Activated T-helper 1 cell treated with anti-CD3 and anti-CD28 coated beads, Interleukin-12 subunit alpha, Interleukin-12 subunit beta, Interleukin-2, Interleukin-4 antibody, amounts not matched to agents 30 ng/mL and 10 ng/mL and 1 ng/mL, durations not matched to agents 14 hours and 24 hours and 36 hours (primary cell): ENCODE measurements at regions of chr3 and their contacts with region 1.

Region 1: DNA sequence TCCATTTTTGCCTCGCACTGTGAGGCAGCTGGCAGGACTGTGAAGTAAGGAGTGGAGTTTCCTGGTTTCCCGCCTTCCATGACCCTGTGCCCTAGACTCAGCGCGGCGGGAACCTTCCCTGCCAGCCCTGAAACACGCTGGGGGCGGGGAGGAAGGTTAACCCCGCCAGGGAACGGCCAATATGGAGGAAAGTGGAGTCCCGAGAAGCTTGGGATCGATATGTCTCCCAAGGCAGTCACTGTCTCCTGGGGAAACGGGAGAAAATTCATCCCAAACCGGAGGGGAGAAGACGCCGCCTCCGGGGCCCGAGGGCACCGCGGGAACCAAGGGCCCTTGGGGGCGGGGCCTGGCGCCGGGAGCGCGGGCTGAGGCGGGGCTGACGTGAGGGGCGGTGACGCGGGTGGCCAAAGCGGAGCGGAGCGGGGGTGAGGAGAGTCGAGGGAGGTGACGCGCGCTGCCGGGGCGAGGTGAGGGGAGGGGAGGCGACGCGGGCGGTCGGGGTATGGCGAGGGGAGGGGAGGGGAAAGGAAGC is at the start of gene HMCES:
- DNase-seq: peak; percentile 92
- H3K4me3 Mint-ChIP-seq: peak within 1 kb of the TSS; percentile 93
- H3K27ac Mint-ChIP-seq: peak within 1 kb of the TSS; percentile 97
- H3K4me1 Mint-ChIP-seq: peaks cover 48% of the 10 kb centered on the region
- H3K27me3 Mint-ChIP-seq: no peaks in the 10 kb centered on the region
- total RNA-seq, gene HMCES: 59.4 and 61.6 TPM in 2 replicates

Region 2: DNA sequence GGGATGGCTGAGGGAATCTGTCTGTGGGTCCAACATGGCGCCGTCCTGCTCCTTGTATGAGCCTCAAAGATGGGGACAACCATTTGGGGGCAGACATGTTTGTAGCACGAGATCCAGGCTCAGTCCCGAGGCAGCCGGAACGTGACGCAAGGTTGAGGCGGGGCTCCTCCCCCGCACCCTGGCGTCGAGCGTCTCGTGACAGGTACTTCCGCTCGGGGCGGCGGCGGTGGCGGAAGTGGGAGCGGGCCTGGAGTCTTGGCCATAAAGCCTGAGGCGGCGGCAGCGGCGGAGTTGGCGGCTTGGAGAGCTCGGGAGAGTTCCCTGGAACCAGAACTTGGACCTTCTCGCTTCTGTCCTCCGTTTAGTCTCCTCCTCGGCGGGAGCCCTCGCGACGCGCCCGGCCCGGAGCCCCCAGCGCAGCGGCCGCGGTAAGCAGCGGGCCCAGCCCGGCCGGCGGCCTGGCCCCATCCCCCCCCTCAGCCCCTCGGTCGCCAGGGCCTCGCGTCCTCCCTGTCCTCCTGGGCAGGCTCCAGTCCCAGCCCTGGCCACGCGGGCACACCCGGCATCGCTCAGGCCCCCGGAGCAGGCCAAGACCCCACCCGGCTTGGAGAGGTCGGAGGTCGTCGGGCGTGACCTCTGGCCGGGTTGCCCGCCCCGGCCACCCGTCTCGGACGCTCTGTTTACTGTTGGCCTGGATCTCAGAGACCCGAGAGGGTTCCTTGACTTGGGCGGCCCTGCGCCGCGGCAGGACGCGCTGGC is 552.4 kb before region 1 on chr3 and contains the start of gene RAB7A:
- intact Hi-C with region 1: no loop called
- DNase-seq: peak; percentile 94
- H3K4me3 Mint-ChIP-seq: peak within 1 kb of the TSS; percentile 99
- H3K27ac Mint-ChIP-seq: peak within 1 kb of the TSS; percentile 93
- H3K4me1 Mint-ChIP-seq: peaks cover 56% of the 10 kb centered on the region
- H3K27me3 Mint-ChIP-seq: no peaks in the 10 kb centered on the region
- total RNA-seq, gene RAB7A: 318 and 329 TPM in 2 replicates

Region 3: GRCh38 chr3:129183569-129184395 is 94.7 kb before region 1 on chr3 and contains the start of gene CNBP:
- intact Hi-C with region 1: loop called (anchors 1 kb)
- DNase-seq: peak; percentile 91
- H3K4me3 Mint-ChIP-seq: peak within 1 kb of the TSS; percentile 97
- H3K27ac Mint-ChIP-seq: peak within 1 kb of the TSS; percentile 98
- H3K4me1 Mint-ChIP-seq: peaks cover 35% of the 10 kb centered on the region
- H3K27me3 Mint-ChIP-seq: no peaks in the 10 kb centered on the region
- total RNA-seq, gene CNBP: 408 and 425 TPM in 2 replicates

Region 4: DNA sequence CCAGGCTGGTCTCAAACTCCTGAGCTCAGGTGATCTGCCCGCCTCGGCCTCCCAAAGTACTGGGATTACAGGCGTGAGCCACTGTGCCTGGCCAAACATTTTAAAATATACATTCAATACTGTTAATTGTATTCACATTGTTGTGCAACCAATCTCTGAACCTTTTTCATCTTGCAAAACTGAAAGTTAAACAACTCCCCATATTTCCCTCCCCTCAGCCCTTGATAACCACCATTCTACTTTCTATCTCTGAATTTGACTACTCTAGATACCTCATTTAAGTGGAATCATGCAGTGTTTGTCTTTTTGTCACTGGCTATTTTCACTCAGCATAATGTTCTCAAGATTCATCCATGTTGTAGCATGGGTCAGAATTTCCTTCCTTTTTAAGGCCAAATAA is 30.1 kb after region 1 on chr3:
- intact Hi-C with region 1: loop called (anchors 1 kb)
- DNase-seq: no peak
- H3K4me3 Mint-ChIP-seq: no peak overlapping the region
- H3K27ac Mint-ChIP-seq: peak overlapping the region; percentile 2
- H3K4me1 Mint-ChIP-seq: peaks cover 63% of the 10 kb centered on the region
- H3K27me3 Mint-ChIP-seq: no peaks in the 10 kb centered on the region

Region 5: DNA sequence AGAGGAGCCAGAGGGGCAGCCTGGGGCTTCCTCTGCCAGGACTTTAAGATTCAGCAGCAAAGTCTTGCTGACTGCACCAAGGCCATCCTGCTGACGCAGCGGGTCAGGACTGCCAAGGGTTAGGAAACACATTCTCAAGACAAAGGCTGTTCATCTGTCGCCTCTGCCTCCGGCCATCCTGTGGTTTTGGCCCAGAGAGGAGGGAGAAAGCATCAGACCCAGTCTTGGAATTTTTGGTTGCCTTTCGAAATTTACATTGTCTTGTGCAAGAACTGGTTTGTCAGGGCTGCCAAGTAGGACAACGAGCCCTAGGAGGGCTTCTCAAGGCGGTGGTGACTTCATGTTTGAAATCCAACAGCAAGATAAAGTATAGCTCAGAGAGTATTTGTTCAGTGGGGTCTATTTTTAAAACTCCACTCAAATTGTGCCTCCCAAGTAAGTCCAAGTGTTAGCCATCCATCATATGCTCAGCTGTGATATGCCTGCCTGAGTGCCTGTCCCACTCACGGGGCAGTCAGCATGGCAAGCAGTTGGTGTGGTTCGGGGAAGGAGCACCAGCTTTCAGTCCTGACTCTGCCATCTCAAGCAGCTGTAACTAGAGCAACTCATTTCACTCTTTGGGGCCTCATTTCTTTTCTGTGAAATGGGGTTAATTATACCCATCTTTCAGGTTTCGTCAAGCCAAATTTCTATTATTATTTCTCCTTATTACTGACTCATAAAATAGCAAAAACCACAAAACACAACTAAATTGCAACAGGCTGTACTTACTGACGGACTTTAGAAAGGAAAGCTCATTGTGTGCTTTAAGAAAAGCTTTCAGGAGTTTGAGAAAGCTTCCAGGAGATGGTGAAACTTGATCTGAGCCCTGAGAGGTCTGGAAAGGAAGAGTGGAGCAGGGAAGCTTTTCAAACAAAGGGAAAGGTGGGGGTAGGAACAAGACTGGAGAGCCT is 207.5 kb after region 1 on chr3:
- intact Hi-C with region 1: no loop called
- DNase-seq: no peak
- H3K4me3 Mint-ChIP-seq: no peak overlapping the region
- H3K27ac Mint-ChIP-seq: no peak overlapping the region
- H3K4me1 Mint-ChIP-seq: peaks cover 8% of the 10 kb centered on the region
- H3K27me3 Mint-ChIP-seq: no peaks in the 10 kb centered on the region

Region 6: DNA sequence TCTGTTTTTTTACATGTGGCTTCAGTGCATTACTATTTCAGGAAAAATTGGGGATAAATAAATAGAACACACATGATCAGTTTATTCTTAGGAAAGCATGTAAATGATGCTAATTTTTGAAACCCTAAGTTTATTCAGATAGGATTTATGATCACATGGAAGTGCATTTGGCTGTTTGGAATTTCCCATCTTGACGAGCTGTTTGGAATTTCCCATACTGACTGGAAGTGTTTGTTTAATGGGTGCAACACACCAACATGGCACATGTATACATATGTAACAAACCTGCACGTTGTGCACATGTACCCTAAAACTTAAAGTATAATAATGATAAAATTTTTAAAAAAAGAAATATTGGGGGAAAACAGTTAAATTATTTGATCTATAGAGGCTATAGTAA is 1318.0 kb after region 1 on chr3:
- intact Hi-C with region 1: no loop called
- DNase-seq: no peak
- H3K4me3 Mint-ChIP-seq: no peak overlapping the region
- H3K27ac Mint-ChIP-seq: no peak overlapping the region
- H3K4me1 Mint-ChIP-seq: no peaks in the 10 kb centered on the region
- H3K27me3 Mint-ChIP-seq: no peaks in the 10 kb centered on the region